SK-MEL-5 (cell line): ENCODE measurements at regions of chr15 and their contacts with region 1.

Region 1: GRCh38 chr15:52261498-52262242 is 33.9 kb downstream of the MYO5C start:
- DNase-seq: peak; percentile 83

Region 2: GRCh38 chr15:52735231-52736089 is 473.8 kb after region 1 on chr15:
- in situ Hi-C with region 1: loop called (anchors 25 kb)
- DNase-seq: peak; percentile 88